Naive thymus-derived CD4-positive, alpha-beta T cell (primary cell): ENCODE measurements at regions of chr7 and their contacts with region 1.

Region 1: DNA sequence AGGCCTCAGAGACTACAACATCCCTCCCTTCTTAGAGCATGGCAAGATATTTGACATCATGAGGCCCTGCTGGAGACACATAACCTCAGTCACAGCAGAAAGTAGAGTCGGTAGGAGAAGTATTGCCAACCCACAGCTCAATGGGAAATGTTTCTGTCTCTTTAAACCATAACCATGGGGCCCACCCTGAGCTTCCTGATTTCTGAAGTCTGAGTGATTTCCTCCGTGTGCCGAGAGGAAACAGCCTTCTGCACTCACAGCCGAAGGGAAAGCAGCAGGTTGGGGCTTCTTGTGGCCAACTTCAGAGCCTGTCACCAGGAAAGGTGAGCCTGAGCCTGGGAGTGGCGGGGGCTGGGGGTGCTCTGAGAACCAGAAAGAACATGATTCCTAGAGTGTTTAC is at the start of gene GIMAP1:
- DNase-seq: peak in 8 of 9 donors; percentile 14 to 85 (median 81)
- ATAC-seq: peak; percentile 90
- H3K4me3 ChIP-seq: peak within 1 kb of the TSS; percentile 88
- H3K4me3 Mint-ChIP-seq: peak within 1 kb of the TSS; percentile 89 to 100 (median 98)
- H3K27ac ChIP-seq: peak within 1 kb of the TSS; percentile 86
- H3K27ac Mint-ChIP-seq: peak within 1 kb of the TSS; percentile 76 to 98 (median 95)
- H3K4me1 ChIP-seq: peaks cover 39 to 46% of the 10 kb centered on the region in 2 donors
- H3K4me1 Mint-ChIP-seq: peaks cover 38 to 77% (median 61%) of the 10 kb centered on the region in 7 donors
- H3K27me3 ChIP-seq: no peaks in the 10 kb centered on the region
- H3K27me3 Mint-ChIP-seq: no peaks in the 10 kb centered on the region
- total RNA-seq, gene GIMAP1: 23.3 to 124 (median 32.6) TPM

Region 2: DNA sequence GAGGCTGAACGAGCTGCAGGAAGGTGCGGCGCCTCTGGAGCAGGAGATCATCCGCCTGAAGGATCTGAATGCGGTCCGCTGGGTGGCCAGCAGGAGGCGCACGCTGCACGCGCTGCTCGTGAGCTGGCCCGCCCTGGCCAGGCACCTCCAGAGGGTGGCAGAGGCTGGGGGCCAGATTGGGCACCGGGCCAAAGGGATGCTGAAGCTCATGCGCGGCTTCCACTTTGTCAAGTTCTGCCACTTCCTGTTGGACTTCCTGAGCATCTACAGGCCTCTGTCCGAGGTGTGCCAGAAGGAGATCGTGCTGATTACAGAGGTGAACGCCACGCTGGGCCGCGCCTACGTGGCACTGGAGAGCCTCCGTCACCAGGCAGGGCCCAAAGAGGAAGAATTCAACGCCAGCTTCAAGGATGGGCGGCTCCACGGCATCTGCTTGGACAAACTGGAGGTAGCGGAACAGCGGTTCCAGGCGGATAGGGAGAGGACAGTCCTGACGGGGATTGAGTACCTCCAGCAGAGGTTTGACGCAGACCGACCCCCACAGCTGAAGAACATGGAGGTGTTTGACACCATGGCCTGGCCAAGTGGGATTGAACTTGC is 854.8 kb before region 1 on chr7:
- CTCF ChIA-PET with region 1: no interaction called
- POLR2A ChIA-PET with region 1: no interaction called
- intact Hi-C with region 1: no loop called
- DNase-seq: no peak
- ATAC-seq: no peak
- H3K4me3 ChIP-seq: no peak overlapping the region
- H3K4me3 Mint-ChIP-seq: peak overlapping the region in 1 of 10 donors; percentile 6
- H3K27ac ChIP-seq: no peak overlapping the region
- H3K27ac Mint-ChIP-seq: peak overlapping the region in 6 of 9 donors; percentile 10 to 83 (median 50)
- H3K4me1 ChIP-seq: peaks cover 29 to 69% of the 10 kb centered on the region in 2 donors
- H3K4me1 Mint-ChIP-seq: peaks cover 36 to 93% (median 83%) of the 10 kb centered on the region in 7 donors
- H3K27me3 ChIP-seq: no peaks in the 10 kb centered on the region
- H3K27me3 Mint-ChIP-seq: no peaks in the 10 kb centered on the region

Region 3: DNA sequence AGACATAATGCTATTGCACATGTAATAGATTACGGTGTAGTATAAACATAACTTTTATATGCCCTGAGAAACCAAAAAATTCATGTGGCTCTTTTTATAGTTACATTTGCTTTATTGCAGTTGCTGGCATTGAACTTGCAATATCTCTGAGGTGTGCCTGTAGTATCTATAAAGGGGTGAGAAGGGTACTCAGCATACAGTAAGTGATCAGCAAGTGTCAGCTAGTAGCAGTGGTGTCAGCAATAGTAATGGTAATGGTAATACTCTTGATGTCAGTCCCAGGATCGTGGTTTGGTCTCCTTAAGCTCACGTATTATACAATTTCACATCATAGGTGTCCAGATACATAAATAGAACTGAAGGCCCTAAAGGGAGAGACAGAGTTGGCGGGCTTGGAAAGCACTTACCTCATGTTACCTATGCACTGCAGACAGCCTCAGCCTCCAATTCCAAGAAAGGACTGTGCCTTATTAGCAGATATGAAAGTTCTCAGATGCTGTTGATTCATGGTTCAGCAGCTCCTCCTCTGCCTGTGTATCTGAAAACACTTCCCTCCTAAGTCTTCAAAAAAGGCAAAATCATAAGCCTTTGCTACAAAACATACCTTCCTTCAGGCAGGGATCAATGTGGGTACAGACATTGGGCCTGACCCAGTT is 208.3 kb before region 1 on chr7:
- CTCF ChIA-PET with region 1: no interaction called
- POLR2A ChIA-PET with region 1: interaction called, 122 read pairs
- intact Hi-C with region 1: no loop called
- DNase-seq: peak in 1 of 9 donors; percentile 22
- ATAC-seq: peak; percentile 56
- H3K4me3 ChIP-seq: peak overlapping the region; percentile 52
- H3K4me3 Mint-ChIP-seq: peak overlapping the region; percentile 67 to 99 (median 88)
- H3K27ac ChIP-seq: peak overlapping the region; percentile 74
- H3K27ac Mint-ChIP-seq: peak overlapping the region; percentile 92 to 98 (median 95)
- H3K4me1 ChIP-seq: peaks cover 61 to 93% of the 10 kb centered on the region in 2 donors
- H3K4me1 Mint-ChIP-seq: peaks cover 54 to 98% (median 94%) of the 10 kb centered on the region in 7 donors
- H3K27me3 ChIP-seq: no peaks in the 10 kb centered on the region
- H3K27me3 Mint-ChIP-seq: no peaks in the 10 kb centered on the region

Region 4: GRCh38 chr7:150620617-150621371 is 95.6 kb before region 1 on chr7:
- CTCF ChIA-PET with region 1: no interaction called
- POLR2A ChIA-PET with region 1: interaction called, 42 read pairs
- intact Hi-C with region 1: no loop called
- DNase-seq: no peak
- ATAC-seq: no peak
- H3K4me3 ChIP-seq: no peak overlapping the region
- H3K4me3 Mint-ChIP-seq: peak overlapping the region; percentile 27 to 73 (median 54)
- H3K27ac ChIP-seq: peak overlapping the region; percentile 60
- H3K27ac Mint-ChIP-seq: peak overlapping the region; percentile 64 to 97 (median 88)
- H3K4me1 ChIP-seq: peaks cover 0 to 25% of the 10 kb centered on the region in 2 donors
- H3K4me1 Mint-ChIP-seq: peaks cover 25 to 84% (median 68%) of the 10 kb centered on the region in 7 donors
- H3K27me3 ChIP-seq: no peaks in the 10 kb centered on the region
- H3K27me3 Mint-ChIP-seq: no peaks in the 10 kb centered on the region

Region 5: DNA sequence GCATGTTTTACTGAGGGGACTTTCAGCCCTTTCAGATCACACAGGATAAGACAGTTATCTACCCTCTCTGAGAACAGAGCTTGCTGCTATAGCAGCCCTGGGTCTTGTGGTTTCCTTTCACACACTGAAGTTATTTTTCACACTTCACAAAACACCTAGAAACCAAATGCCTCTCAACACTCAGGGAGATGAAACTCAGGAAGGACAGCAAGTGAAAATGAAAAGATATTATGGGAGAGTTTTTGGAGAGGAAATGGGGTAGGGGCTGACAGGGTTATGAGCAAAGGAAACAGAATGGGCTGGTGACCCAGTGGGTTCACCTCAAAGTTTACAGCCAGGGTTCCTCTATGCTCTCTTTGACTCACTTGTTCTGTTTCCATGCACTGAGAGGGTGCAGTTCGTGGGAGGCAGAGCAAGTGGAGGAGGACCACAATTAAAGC is 47.9 kb before region 1 on chr7:
- CTCF ChIA-PET with region 1: interaction called, 3 read pairs
- POLR2A ChIA-PET with region 1: interaction called, 88 read pairs
- intact Hi-C with region 1: loop called (anchors 1 kb)
- DNase-seq: peak in 8 of 9 donors; percentile 66 to 87 (median 81)
- ATAC-seq: peak; percentile 88
- H3K4me3 ChIP-seq: peak overlapping the region; percentile 30
- H3K4me3 Mint-ChIP-seq: peak overlapping the region; percentile 57 to 85 (median 72)
- H3K27ac ChIP-seq: peak overlapping the region; percentile 78
- H3K27ac Mint-ChIP-seq: peak overlapping the region; percentile 73 to 100 (median 97)
- H3K4me1 ChIP-seq: peaks cover 71 to 86% of the 10 kb centered on the region in 2 donors
- H3K4me1 Mint-ChIP-seq: peaks cover 58 to 99% (median 94%) of the 10 kb centered on the region in 7 donors
- H3K27me3 ChIP-seq: no peaks in the 10 kb centered on the region
- H3K27me3 Mint-ChIP-seq: no peaks in the 10 kb centered on the region

Region 6: DNA sequence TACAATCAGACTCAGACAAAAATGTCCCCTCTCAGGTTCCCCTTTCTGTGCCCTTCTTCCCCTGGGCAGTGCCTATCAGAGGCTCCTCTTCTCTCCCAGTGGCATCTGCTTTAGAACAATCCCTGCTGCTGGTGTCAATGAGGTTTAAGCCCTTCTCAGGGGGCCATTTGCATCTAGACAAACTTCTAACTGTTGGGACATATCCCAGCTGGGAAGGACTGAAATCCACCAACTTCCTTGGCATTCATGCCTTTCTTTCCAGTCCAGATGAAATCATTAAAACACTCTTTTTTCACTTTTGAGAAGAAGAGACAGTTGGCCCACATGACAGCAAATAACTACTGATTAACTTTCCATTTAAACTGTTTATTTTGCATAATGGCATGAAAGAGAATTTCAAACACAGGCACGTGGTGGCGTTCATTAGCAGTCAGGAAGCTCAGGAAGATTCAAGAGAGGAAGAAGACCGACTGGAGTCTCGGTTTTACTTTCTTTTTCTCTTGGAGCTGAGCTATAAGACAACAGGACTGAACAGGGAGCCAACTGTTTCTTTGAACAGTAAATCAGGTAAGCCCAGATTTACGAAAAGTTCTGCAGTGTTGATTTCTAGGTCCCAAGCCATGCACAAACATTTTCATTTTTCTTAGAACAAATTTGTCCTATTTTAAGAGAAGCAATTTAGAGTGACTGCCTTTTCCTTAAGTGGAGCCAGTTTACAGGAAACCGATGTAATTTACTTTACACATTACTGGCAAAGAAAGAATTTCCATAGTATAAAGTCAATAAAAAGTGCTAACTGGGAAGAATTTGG is 30.9 kb before region 1 on chr7 and contains the start of gene GIMAP2:
- CTCF ChIA-PET with region 1: interaction called, 5 read pairs
- POLR2A ChIA-PET with region 1: interaction called, 188 read pairs
- intact Hi-C with region 1: loop called (anchors 1 kb)
- DNase-seq: peak in 7 of 9 donors; percentile 40 to 73 (median 65)
- ATAC-seq: peak; percentile 90
- H3K4me3 ChIP-seq: peak within 1 kb of the TSS; percentile 97
- H3K4me3 Mint-ChIP-seq: peak within 1 kb of the TSS; percentile 88 to 100 (median 98)
- H3K27ac ChIP-seq: peak within 1 kb of the TSS; percentile 78
- H3K27ac Mint-ChIP-seq: peak within 1 kb of the TSS; percentile 91 to 100 (median 97)
- H3K4me1 ChIP-seq: peaks cover 49 to 53% of the 10 kb centered on the region in 2 donors
- H3K4me1 Mint-ChIP-seq: peaks cover 50 to 87% (median 81%) of the 10 kb centered on the region in 7 donors
- H3K27me3 ChIP-seq: no peaks in the 10 kb centered on the region
- H3K27me3 Mint-ChIP-seq: no peaks in the 10 kb centered on the region
- total RNA-seq, gene GIMAP2: 79.4 to 286 (median 122) TPM